ENCODE measurements at regions of chr1 and their contacts with region 1.

Region 1: DNA sequence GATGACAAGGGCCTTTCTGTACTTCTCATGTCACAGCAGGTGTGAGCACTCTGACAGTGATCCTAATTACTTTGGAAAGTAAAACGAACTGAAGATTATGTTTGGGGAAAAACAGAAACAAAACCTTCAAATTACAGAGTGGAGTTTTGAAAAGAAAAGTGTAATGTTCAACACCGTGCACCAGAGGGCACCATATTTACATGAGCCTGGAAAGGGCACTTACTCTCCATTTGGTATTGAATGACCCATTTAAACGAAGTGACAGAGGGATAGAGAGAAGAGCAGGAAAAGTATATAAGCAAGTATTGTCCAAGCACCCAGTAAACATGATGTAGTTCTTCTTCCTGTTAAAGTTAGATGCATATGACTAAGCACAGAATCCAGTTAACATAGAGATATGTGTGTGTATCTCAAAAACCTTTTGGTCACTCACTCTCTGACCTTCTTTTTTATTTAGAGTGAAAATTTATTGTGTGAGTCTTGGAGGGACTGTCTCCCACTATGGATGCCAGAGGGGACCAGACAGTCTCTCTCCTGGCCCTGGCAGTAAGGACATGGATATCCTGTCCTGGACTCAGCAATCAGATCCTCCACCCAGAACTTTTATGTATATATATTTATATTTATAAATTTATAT is 3.8 kb upstream of the RGSL1 start:
- DNase-seq: peak; percentile 31
- H3K4me3 ChIP-seq: no peak overlapping the region
- H3K27ac ChIP-seq: no peak overlapping the region
- H3K4me1 ChIP-seq: no peaks in the 10 kb centered on the region
- H3K27me3 ChIP-seq: no peaks in the 10 kb centered on the region
- CTCF ChIP-seq: peak; percentile 73 to 75

Region 2: GRCh38 chr1:182507665-182508064 is 61.5 kb after region 1 on chr1:
- CTCF ChIA-PET with region 1: no interaction called
- dilution Hi-C with region 1: no loop called
- in situ Hi-C with region 1: no loop called
- intact Hi-C with region 1: no loop called
- DNase-seq: peak; percentile 8
- H3K4me3 ChIP-seq: no peak overlapping the region
- H3K27ac ChIP-seq: no peak overlapping the region
- H3K4me1 ChIP-seq: no peaks in the 10 kb centered on the region
- H3K27me3 ChIP-seq: no peaks in the 10 kb centered on the region
- CTCF ChIP-seq: no peak

Region 3: DNA sequence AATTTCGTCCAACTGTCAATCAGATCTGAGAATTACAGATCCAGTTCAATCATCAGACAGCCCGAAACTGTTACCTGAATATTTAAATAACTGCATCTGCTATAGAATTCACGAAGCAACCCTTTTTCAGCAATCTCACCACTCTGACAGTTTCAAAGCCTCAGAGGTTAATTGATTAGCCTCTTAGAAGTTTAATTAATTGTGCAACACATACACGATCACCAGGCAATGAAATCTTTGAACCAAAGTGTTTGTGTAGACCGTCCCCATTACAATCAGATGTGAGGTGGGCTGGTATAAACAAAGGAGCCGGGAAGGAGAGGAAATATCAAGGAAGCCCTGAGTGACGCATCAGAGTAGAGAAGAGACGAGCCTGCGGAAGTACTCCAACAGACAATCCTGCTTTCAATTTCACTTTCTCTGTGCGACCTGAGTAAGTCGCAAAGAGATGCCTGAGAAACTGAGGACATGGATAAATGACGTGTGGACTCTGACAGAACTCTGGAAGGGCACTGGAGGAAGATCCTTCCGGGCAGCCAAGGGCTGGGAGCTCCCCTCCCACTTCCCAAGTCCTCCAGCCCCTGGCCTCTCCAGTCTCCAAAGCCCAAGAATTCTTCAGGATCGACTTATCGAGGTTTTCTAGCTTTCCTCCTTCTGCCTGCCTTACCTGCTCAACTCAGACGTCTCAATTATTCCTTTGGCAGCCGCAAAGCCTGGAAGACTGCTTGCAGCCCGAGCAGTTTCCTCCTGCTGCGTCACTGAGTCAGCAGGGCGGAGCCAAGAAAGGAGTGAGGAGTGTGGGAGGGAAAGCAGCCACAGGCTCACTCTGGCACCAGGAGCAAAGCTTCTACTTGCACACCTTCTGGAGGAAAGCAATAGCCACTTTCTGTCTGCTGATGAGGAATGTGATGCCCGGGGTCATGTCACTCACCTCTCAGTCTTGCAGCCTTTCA is 142.6 kb after region 1 on chr1 and contains the start of gene RNASEL:
- CTCF ChIA-PET with region 1: no interaction called
- dilution Hi-C with region 1: no loop called
- in situ Hi-C with region 1: loop called in 1 of 2 experiments (anchors 5 kb)
- intact Hi-C with region 1: no loop called
- DNase-seq: peak; percentile 75
- H3K4me3 ChIP-seq: peak within 1 kb of the TSS; percentile 69 to 77 (median 72)
- H3K27ac ChIP-seq: peak within 1 kb of the TSS; percentile 73
- H3K4me1 ChIP-seq: peaks cover 2% of the 10 kb centered on the region
- H3K27me3 ChIP-seq: no peaks in the 10 kb centered on the region
- CTCF ChIP-seq: no peak
- total RNA-seq, gene RNASEL: 3.0 to 3.5 TPM

Region 4: DNA sequence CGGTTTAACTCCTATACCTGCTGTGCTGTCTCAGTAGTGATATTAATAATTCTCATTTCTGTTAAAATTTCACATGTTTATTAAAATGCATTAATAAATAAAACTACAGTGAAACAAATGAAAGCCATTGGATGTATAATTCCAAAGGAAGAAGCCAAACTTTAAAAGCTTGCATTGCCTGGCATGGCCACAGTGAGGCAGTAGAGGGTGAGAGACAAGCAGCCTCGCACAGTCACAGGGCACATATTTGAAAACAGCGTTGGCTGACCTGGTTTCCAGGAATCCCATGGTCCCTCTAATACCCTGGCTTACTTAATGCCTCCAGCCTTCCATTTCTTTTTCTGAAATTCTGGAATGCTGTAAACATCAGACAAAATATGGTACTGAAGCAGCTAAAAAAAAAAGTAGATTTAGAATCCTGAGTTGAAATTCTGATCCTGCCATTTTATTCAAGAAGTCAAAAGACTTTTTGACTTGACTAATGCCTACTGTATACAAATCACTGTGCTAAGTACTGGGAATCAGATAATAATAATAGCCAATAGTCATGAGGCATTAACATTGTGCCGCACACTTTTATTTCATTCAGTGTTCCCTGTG is 149.6 kb after region 1 on chr1:
- CTCF ChIA-PET with region 1: no interaction called
- dilution Hi-C with region 1: no loop called
- in situ Hi-C with region 1: loop called in 1 of 2 experiments (anchors 10 kb)
- intact Hi-C with region 1: loop called (anchors 2 kb)
- DNase-seq: peak; percentile 33
- H3K4me3 ChIP-seq: no peak overlapping the region
- H3K27ac ChIP-seq: no peak overlapping the region
- H3K4me1 ChIP-seq: no peaks in the 10 kb centered on the region
- H3K27me3 ChIP-seq: no peaks in the 10 kb centered on the region
- CTCF ChIP-seq: peak; percentile 90 to 98

Region 5: GRCh38 chr1:182604169-182605164 is 158.3 kb after region 1 on chr1 and contains the start of gene RGS16:
- CTCF ChIA-PET with region 1: no interaction called
- dilution Hi-C with region 1: no loop called
- in situ Hi-C with region 1: loop called in 1 of 2 experiments (anchors 10 kb)
- intact Hi-C with region 1: no loop called
- DNase-seq: peak; percentile 84
- H3K4me3 ChIP-seq: peak within 1 kb of the TSS; percentile 49 to 72 (median 67)
- H3K27ac ChIP-seq: no peak within 1 kb of the TSS
- H3K4me1 ChIP-seq: peaks cover 11% of the 10 kb centered on the region
- H3K27me3 ChIP-seq: no peaks in the 10 kb centered on the region
- CTCF ChIP-seq: no peak
- total RNA-seq, gene RGS16: 0.33 to 0.52 TPM

Region 6: DNA sequence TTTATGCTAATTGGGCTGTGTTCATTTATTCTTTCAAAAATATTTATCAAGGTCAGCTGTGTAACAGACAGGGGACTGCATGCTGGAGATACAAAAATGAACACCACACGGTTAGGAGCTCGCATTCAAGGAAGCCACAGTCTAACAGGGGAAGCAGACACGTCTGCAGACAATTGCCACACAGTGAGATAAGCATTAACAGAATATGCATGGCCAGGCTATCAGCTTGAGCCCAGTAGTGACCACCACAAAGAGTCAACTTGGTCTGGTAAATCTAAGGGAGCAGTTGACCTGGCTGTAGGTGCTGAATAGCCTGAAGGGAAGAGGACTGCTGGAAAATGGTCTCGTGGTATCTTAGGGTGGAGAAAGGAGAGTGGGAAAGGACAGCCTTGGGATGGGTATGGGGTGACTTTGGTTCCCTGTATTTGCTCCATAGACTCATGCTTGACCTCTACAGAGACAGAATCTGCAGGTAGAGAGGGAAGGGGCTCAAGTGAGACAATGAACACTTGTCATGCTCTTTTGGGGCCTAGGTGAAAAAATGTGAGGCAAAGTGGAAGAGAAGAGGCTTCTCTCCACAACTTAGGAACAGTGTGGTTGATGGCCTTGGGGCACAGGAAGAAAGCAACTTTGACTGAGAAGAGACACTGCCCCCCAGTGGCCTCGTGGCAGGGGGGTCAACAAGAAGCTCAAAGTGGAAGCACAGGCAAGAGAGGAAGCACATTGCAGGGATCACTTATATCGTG is 335.9 kb after region 1 on chr1:
- CTCF ChIA-PET with region 1: interaction called, 8 read pairs
- dilution Hi-C with region 1: no loop called
- in situ Hi-C with region 1: loop called (anchors 10 kb)
- intact Hi-C with region 1: loop called (anchors 1 kb)
- DNase-seq: peak; percentile 49
- H3K4me3 ChIP-seq: no peak overlapping the region
- H3K27ac ChIP-seq: no peak overlapping the region
- H3K4me1 ChIP-seq: no peaks in the 10 kb centered on the region
- H3K27me3 ChIP-seq: no peaks in the 10 kb centered on the region
- CTCF ChIP-seq: peak; percentile 66 to 87

Measured in mammary epithelial cell (primary cell).